Mammary epithelial cell (primary cell): ENCODE measurements at regions of chr12 and their contacts with region 1.

Region 1: DNA sequence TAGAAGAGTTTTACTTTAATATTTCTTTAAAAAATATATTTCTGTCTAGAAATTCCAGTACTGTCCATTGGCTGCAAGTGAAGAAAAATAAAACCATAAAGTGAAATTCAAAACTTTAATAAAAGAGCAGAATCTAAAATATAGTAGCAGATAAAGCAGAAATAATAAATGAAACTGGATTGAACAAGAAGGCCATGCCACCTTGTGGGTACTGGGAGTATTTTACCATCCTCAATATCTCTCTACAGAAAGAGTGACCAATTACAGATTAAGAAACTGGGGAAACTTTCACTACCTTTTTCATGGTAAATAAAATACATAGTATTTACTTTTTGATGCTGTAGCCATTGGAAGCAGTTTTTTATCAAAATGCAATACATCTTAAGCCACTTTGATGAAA is 220.5 kb downstream of the BCAT1 start:
- DNase-seq: peak; percentile 14
- H3K4me3 ChIP-seq: no peak overlapping the region
- H3K27ac ChIP-seq: no peak overlapping the region
- H3K4me1 ChIP-seq: no peaks in the 10 kb centered on the region
- H3K27me3 ChIP-seq: no peaks in the 10 kb centered on the region
- CTCF ChIP-seq: peak; percentile 47 to 59

Region 2: GRCh38 chr12:24109381-24110039 is 618.9 kb before region 1 on chr12:
- CTCF ChIA-PET with region 1: no interaction called
- dilution Hi-C with region 1: no loop called
- in situ Hi-C with region 1: no loop called
- intact Hi-C with region 1: loop called (anchors 2 kb)
- DNase-seq: peak; percentile 7
- H3K4me3 ChIP-seq: no peak overlapping the region
- H3K27ac ChIP-seq: no peak overlapping the region
- H3K4me1 ChIP-seq: no peaks in the 10 kb centered on the region
- H3K27me3 ChIP-seq: no peaks in the 10 kb centered on the region
- CTCF ChIP-seq: peak; percentile 51 to 59

Region 3: DNA sequence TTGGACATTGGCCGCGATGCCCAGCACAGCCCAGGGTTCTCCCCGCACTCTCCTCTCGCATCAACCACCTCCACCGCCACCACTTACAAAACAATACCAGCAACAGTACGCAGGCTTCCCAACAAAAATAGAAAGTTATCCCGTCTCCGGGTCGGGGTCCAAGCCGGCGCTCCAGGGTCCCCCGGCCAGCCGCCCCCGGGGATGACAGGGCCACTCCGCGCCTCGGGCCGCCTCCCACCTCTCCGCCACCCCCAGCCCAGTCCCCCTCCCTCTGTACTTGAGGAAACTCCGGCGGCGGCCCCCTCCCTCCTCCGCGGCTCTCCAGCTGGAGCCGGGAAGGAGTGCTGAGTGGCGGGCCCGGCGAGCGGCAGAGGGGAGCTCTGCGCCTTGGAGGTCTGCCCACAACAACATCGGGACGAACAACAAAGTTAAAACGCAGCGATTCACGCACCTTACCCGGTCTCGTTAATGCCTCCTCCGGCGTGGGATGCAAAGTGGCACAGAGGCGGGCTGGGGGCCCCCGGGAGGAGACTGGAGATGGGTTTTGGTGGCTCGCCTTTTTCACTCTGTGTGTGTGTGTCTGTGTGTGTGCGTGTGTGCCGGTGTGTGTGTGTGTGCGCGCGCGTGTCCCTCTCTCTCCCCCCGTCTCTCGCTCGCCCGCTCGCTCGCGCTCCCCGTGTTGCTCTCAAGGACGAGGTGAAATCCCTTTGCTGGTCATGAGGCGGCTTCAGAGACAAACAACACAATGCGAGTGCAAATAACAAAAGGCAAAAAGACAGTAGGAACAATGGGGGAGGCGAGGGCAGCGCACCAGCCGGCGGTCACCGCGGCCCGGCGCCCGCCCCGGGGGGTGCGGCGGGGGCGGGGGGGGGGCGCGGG is 166.2 kb before region 1 on chr12:
- CTCF ChIA-PET with region 1: no interaction called
- dilution Hi-C with region 1: no loop called
- in situ Hi-C with region 1: no loop called
- intact Hi-C with region 1: loop called (anchors 5 kb)
- DNase-seq: peak; percentile 12
- H3K4me3 ChIP-seq: peak overlapping the region; percentile 46 to 73 (median 46)
- H3K27ac ChIP-seq: no peak overlapping the region
- H3K4me1 ChIP-seq: peaks cover 18% of the 10 kb centered on the region
- H3K27me3 ChIP-seq: peaks cover 44% of the 10 kb centered on the region
- CTCF ChIP-seq: no peak

Region 4: GRCh38 chr12:24596768-24597388 is 131.5 kb before region 1 on chr12:
- CTCF ChIA-PET with region 1: no interaction called
- dilution Hi-C with region 1: no loop called
- in situ Hi-C with region 1: no loop called
- intact Hi-C with region 1: loop called (anchors 10 kb)
- DNase-seq: peak; percentile 20
- H3K4me3 ChIP-seq: no peak overlapping the region
- H3K27ac ChIP-seq: no peak overlapping the region
- H3K4me1 ChIP-seq: peaks cover 6% of the 10 kb centered on the region
- H3K27me3 ChIP-seq: no peaks in the 10 kb centered on the region
- CTCF ChIP-seq: peak; percentile 66 to 70

Region 5: GRCh38 chr12:24608637-24609285 is 119.6 kb before region 1 on chr12:
- CTCF ChIA-PET with region 1: no interaction called
- dilution Hi-C with region 1: no loop called
- in situ Hi-C with region 1: no loop called
- intact Hi-C with region 1: no loop called
- DNase-seq: no peak
- H3K4me3 ChIP-seq: no peak overlapping the region
- H3K27ac ChIP-seq: no peak overlapping the region
- H3K4me1 ChIP-seq: no peaks in the 10 kb centered on the region
- H3K27me3 ChIP-seq: no peaks in the 10 kb centered on the region
- CTCF ChIP-seq: no peak